OCI-LY7 (cell line): ENCODE measurements at regions of chr18 and their contacts with region 1.

Region 1: GRCh38 chr18:74597662-74598349 is at the start of gene ZNF407:
- DNase-seq: peak; percentile 83
- H3K4me3 ChIP-seq: peak within 1 kb of the TSS; percentile 77
- H3K27ac ChIP-seq: peak within 1 kb of the TSS; percentile 76
- H3K4me1 ChIP-seq: peaks cover 23% of the 10 kb centered on the region
- CTCF ChIP-seq: no peak
- total RNA-seq, gene ZNF407: 8.9 and 10.5 TPM in 2 replicates

Region 2: DNA sequence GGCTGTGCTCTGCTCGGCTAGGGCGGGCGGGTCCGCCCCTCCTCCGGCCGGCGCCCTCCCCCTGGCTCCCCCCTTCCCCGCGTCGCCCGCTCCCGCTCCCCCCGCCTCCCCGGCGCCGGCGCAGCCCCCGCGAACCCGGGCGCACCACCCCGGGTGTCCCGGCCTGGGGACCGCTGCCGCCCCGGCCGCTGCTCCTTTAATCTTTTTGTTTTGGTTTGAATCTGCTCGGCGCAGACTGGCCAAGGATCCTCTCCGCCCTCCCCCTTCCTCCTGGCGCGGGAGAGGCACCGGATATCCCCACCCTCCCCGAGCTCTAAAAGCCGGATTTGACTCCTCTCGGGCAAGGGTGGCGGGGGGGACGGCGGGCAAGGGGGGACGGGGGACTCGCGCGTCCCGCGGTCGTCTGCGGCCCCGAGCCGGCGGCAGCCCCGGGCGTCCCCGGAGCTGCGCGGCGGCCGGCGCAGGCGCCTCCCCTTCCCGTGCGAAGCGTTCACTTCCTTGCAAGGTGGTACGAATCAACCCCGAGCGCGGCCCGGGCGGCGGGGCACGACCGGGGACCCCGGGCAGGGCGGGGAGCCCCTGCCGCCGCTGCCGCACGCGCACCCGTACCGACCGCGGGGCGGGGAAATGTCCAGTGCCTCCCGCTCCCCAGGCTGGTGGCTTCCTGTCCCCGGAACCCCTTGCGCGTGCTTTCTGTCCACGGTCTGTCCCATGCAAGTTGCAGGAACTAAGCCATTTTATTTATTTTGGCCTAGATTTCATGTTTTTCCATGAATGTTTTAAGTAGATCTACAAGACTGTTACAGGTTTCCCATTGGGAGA is 611.5 kb after region 1 on chr18 and contains the start of gene PTGR3:
- CTCF ChIA-PET with region 1: no interaction called
- POLR2A ChIA-PET with region 1: no interaction called
- intact Hi-C with region 1: loop called (anchors 5 kb)
- DNase-seq: peak; percentile 70
- H3K4me3 ChIP-seq: peak within 1 kb of the TSS; percentile 86
- H3K27ac ChIP-seq: peak within 1 kb of the TSS; percentile 74
- H3K4me1 ChIP-seq: peaks cover 13% of the 10 kb centered on the region
- CTCF ChIP-seq: no peak
- total RNA-seq, gene PTGR3: 1.8 and 3.0 TPM in 2 replicates